Prostate gland (tissue), 2 donors: ENCODE measurements at regions of chr18 and their contacts with region 1.

Region 1: DNA sequence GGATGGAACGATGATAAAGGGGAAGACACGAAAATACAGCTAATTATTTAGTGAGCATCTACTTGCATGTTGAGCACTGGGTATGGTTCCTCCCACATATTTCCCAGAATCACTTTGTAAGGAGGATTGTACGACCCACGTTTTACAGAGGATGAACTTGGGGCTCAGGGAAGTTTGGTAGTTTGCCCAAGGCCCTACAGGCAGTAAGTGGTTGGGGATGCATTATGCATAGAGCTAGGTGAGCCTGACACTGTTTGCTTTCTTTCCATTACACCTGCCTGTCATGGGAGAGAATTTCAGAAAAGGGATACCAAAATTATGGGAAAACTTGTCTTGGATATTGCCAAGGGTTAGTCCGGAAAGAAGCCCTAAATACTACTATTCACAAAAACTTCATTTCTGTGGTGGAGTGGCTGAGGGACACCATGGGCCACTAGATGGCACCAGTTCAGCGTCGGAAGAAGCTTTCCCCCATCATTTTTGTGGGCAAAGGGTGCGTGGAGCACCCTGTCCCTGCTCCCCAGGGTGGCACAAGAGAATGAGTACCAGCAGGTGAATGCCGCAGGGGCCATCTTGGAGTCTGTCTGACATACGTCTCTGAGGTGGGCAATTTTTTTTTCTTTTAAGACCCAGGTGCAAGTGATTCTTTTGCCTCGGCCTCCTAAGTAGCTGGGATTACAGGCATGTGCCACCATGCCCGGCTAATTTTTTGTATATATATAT is 23.5 kb upstream of the C18orf32 start:
- DNase-seq: peak; percentile 20
- H3K4me3 ChIP-seq: no peak overlapping the region
- H3K27ac ChIP-seq: no peak overlapping the region
- H3K4me1 ChIP-seq: no peaks in the 10 kb centered on the region
- H3K27me3 ChIP-seq: no peaks in the 10 kb centered on the region
- CTCF ChIP-seq: peak; percentile 37 to 73 (median 66)
- POLR2A ChIP-seq: no peak

Region 2: DNA sequence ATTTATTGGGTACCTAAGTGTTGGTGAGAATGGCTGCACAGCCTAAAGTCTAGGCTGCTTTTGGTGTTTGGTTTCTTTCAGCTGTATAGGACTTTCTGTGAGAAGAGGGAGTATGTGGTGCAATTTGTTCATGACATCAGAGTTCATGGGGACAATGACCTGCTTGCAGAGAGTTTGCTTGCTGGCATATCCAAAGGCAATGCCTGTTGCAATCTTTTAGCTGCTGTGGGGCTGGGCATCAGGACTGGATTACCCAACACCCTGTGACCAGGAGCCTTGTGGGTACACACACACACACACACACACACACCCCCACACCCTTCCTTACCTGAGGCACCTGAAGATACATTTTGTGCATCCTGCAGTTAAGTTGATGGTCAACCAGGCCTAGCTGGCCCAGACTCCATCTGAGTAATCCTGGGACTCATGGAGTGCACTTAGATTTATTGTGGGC is 119.7 kb after region 1 on chr18:
- intact Hi-C with region 1: loop called (anchors 10 kb)
- DNase-seq: no peak
- H3K4me3 ChIP-seq: no peak overlapping the region
- H3K27ac ChIP-seq: no peak overlapping the region
- H3K4me1 ChIP-seq: no peaks in the 10 kb centered on the region
- H3K27me3 ChIP-seq: no peaks in the 10 kb centered on the region
- CTCF ChIP-seq: no peak
- POLR2A ChIP-seq: no peak

Region 3: GRCh38 chr18:49768051-49768391 is 257.5 kb after region 1 on chr18:
- intact Hi-C with region 1: loop called (anchors 5 kb)
- DNase-seq: peak; percentile 71
- H3K4me3 ChIP-seq: no peak overlapping the region
- H3K27ac ChIP-seq: no peak overlapping the region
- H3K4me1 ChIP-seq: no peaks in the 10 kb centered on the region
- H3K27me3 ChIP-seq: no peaks in the 10 kb centered on the region
- CTCF ChIP-seq: peak; percentile 43 to 70 (median 65)
- POLR2A ChIP-seq: no peak

Region 4: DNA sequence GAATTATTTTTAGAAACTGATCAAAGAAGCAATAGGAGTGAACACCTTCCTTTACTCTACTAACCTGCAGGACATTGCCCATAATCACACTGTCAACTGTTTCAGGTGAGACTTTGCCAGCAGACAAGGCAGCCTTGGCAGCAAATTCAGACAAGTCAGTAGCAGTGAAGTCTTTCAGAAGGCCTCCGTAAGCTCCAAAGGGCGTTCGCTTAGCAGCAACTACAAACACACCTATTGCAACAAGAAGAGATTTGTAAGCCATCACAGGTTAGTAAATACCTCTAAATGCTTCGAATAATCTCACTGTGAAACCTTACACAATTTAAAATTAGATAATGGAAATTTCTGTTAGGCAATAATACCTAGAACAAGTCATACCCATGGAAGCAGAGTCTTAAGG is 292.1 kb after region 1 on chr18:
- intact Hi-C with region 1: no loop called
- DNase-seq: no peak
- H3K4me3 ChIP-seq: no peak overlapping the region
- H3K27ac ChIP-seq: no peak overlapping the region
- H3K4me1 ChIP-seq: no peaks in the 10 kb centered on the region
- H3K27me3 ChIP-seq: no peaks in the 10 kb centered on the region
- CTCF ChIP-seq: no peak
- POLR2A ChIP-seq: no peak

Region 5: DNA sequence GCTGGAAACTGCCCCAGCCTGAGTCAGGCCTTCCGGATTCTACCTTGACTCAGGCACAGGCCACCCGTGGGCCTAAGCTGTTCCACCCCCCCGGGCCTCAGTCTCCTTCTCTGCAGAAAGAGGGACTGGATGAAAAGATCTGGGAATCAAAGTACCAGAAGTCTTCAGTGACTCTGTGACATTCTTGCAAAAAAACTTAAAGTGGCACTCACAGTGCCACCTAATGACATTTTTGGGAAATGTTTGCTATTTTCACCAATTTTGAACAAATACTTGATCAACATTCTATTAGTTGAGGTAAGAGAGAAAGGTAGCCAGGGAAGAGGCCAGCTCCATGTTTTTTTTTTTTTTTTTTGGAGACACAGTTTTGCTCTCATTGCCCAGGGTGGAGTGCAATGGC is 351.1 kb after region 1 on chr18:
- intact Hi-C with region 1: loop called (anchors 5 kb)
- DNase-seq: no peak
- H3K4me3 ChIP-seq: no peak overlapping the region
- H3K27ac ChIP-seq: no peak overlapping the region
- H3K4me1 ChIP-seq: peaks cover 2% of the 10 kb centered on the region
- H3K27me3 ChIP-seq: no peaks in the 10 kb centered on the region
- CTCF ChIP-seq: no peak
- POLR2A ChIP-seq: no peak